ENCODE measurements at regions of chr2 and their contacts with region 1.

Region 1: GRCh38 chr2:216031960-216032689 is 18.8 kb upstream of the MREG start:
- DNase-seq: no peak

Region 2: GRCh38 chr2:215435809-215436704 is 596.1 kb before region 1 on chr2 and contains the start of gene FN1:
- intact Hi-C with region 1: no loop called
- DNase-seq: peak; percentile 44 to 95 (median 75)

Region 3: GRCh38 chr2:216081487-216082116 is 49.5 kb after region 1 on chr2 and contains the starts of genes PECR and TMEM169:
- intact Hi-C with region 1: loop called (anchors 2 kb)
- DNase-seq: peak; percentile 76 to 98 (median 86)

Measured in posterior cingulate gyrus (tissue), 11 donors.